ENCODE measurements at regions of chr2 and their contacts with region 1.

Region 1: GRCh38 chr2:189633392-189633811 is 27.9 kb upstream of the ASNSD1 start:
- DNase-seq: peak; percentile 67
- ATAC-seq: no peak

Region 2: DNA sequence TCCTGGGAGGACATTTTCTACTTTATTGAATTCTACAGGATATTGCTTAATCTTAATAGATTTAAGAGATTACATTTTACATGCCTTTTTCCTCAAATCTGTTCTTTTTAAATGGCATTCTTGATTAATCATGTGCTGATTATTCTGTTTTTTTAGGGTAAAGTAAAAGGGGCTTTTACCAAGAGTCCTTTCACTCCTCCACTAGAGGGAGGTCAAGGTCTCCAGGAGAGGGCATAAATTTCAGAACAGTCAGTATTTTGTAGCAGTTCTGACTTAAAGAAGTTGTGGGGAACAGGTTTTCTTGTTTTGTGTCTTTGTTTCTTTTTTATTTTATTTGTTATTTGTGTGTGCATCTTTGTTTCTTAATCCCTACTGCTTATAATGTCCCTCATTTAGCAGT is 166.7 kb before region 1 on chr2:
- intact Hi-C with region 1: loop called (anchors 2 kb)
- DNase-seq: no peak
- ATAC-seq: peak; percentile 65

Region 3: GRCh38 chr2:190137561-190137960 is 504.2 kb after region 1 on chr2:
- intact Hi-C with region 1: no loop called
- DNase-seq: no peak
- ATAC-seq: no peak

Measured in Right ventricle myocardium inferior (tissue), 1 donor.